Vagina (tissue), 2 donors: ENCODE measurements at regions of chr5 and their contacts with region 1.

Region 1: GRCh38 chr5:180470966-180471582 is 23.1 kb upstream of the CNOT6 start:
- DNase-seq: no peak
- H3K4me3 ChIP-seq: no peak overlapping the region
- H3K27ac ChIP-seq: no peak overlapping the region
- H3K4me1 ChIP-seq: no peaks in the 10 kb centered on the region
- H3K27me3 ChIP-seq: no peaks in the 10 kb centered on the region
- CTCF ChIP-seq: peak; percentile 72 to 84 (median 78)
- POLR2A ChIP-seq: no peak

Region 2: GRCh38 chr5:179228341-179229121 is 1242.5 kb before region 1 on chr5:
- intact Hi-C with region 1: no loop called
- DNase-seq: peak in 1 of 2 donors; percentile 79
- H3K4me3 ChIP-seq: no peak overlapping the region
- H3K27ac ChIP-seq: peak overlapping the region; percentile 53
- H3K4me1 ChIP-seq: peaks cover 18% of the 10 kb centered on the region
- H3K27me3 ChIP-seq: no peaks in the 10 kb centered on the region
- CTCF ChIP-seq: no peak
- POLR2A ChIP-seq: no peak

Region 3: GRCh38 chr5:180291943-180292831 is 178.9 kb before region 1 on chr5 and contains the start of gene MAPK9:
- intact Hi-C with region 1: loop called (anchors 5 kb)
- DNase-seq: peak; percentile 85 to 89
- H3K4me3 ChIP-seq: peak within 1 kb of the TSS; percentile 70 to 81
- H3K27ac ChIP-seq: peak within 1 kb of the TSS; percentile 89
- H3K4me1 ChIP-seq: peaks cover 31% of the 10 kb centered on the region
- H3K27me3 ChIP-seq: no peaks in the 10 kb centered on the region
- CTCF ChIP-seq: peak in 1 of 3 experiments; percentile 42
- POLR2A ChIP-seq: peak in 1 of 2 donors; percentile 7
- total RNA-seq, gene MAPK9: 19.6 TPM

Region 4: DNA sequence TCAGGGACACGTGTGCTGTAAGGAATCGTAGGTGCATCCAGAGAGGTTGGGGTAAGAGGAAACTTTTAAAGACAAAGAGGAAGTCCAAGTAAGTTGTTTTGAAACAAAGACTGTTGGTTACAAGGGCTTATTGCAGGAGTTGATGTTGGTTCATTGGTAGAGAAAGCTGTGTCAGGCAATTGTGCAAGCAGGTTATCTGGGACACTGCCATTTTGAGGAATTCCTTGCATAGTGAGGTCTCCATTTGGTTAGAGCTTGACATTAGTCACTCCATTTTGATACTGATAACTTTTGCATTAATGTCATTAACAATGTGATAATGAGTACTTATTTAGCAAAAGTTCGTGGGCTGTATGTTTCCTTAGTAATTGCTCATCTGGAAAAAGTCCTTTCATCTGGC is 48.0 kb after region 1 on chr5:
- intact Hi-C with region 1: no loop called
- DNase-seq: no peak
- H3K4me3 ChIP-seq: no peak overlapping the region
- H3K27ac ChIP-seq: no peak overlapping the region
- H3K4me1 ChIP-seq: peaks cover 32% of the 10 kb centered on the region
- H3K27me3 ChIP-seq: no peaks in the 10 kb centered on the region
- CTCF ChIP-seq: no peak
- POLR2A ChIP-seq: no peak